Calu3 (cell line): ENCODE measurements at regions of chr2 and their contacts with region 1.

Region 1: GRCh38 chr2:85772019-85772745 is 18.4 kb downstream of the ATOH8 start:
- DNase-seq: peak; percentile 92
- H3K4me3 Mint-ChIP-seq: no peak overlapping the region
- H3K27ac Mint-ChIP-seq: no peak overlapping the region
- H3K4me1 Mint-ChIP-seq: peaks cover 25% of the 10 kb centered on the region
- H3K27me3 Mint-ChIP-seq: no peaks in the 10 kb centered on the region
- CTCF ChIP-seq: peak; percentile 16

Region 2: DNA sequence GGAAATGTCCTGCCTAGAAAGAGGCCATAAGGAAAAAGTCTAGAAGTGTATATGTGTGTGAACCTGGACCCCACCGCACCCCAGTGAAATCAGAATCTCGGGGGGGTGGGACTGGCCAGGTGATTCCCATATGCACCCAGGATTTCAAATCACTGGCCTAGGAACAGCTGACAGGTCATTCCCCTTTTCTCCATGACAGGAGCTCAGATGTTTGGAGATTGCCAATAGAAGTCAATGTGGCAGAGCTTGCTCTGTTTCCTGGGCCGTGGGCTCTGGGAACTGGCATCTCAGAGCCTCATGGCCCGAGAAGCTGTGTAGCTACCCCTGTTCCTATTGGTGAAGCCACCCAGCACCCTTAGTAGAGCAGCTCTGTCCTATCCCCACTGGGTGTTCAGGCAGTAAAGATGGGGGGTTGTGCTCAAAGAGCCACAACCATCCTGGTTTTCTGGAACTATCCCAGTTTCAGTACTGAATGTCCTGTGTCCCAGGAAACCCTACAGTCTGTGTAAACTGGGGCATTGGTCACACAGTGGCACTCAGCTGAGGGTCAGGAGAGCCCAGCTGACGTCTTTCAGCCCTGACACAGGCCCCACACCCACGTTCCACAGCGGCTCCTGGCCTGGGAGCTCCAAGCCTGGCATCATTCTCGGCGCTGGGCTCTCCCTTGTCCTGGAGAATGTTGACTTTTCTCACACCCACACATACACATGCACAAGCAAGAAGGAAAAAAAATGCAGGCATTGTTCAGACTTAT is 59.2 kb before region 1 on chr2:
- CTCF ChIA-PET with region 1: no interaction called
- intact Hi-C with region 1: no loop called
- DNase-seq: peak; percentile 50
- H3K4me3 Mint-ChIP-seq: no peak overlapping the region
- H3K27ac Mint-ChIP-seq: no peak overlapping the region
- H3K4me1 Mint-ChIP-seq: peaks cover 11% of the 10 kb centered on the region
- H3K27me3 Mint-ChIP-seq: peaks cover 7% of the 10 kb centered on the region
- CTCF ChIP-seq: no peak

Region 3: DNA sequence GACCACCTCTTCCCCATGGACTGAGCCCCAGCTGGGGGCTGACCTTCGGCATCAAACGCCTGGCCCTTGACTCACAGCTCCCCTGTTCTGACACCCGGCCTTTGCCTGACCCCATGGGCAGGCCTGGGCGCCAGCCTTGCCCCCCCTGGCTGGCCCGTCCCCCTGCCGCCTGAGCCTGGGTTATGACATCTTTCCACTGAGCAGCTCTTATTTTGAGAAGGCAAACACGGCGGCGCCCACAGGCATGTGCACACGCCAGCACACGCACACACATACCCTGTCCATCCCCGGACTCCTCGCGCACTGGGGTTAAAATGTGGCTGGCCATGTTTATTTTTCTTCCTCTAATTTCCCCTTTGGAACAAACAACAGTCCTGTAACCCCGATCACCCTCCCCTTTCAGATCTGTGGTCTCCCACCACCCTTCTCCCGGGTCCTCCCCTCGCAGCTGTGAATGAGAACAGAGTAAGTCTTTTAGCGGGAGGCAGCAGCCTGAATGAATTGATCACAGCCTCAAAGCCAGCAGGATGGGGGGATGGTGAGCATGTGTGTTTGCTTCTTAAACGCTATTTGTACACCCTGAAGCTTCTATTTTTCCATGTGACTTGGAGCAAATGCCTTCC is 30.2 kb before region 1 on chr2:
- CTCF ChIA-PET with region 1: interaction called, 22 read pairs
- intact Hi-C with region 1: loop called (anchors 1 kb)
- DNase-seq: peak; percentile 67
- H3K4me3 Mint-ChIP-seq: peak overlapping the region; percentile 53
- H3K27ac Mint-ChIP-seq: peak overlapping the region; percentile 84
- H3K4me1 Mint-ChIP-seq: peaks cover 38% of the 10 kb centered on the region
- H3K27me3 Mint-ChIP-seq: no peaks in the 10 kb centered on the region
- CTCF ChIP-seq: no peak

Region 4: DNA sequence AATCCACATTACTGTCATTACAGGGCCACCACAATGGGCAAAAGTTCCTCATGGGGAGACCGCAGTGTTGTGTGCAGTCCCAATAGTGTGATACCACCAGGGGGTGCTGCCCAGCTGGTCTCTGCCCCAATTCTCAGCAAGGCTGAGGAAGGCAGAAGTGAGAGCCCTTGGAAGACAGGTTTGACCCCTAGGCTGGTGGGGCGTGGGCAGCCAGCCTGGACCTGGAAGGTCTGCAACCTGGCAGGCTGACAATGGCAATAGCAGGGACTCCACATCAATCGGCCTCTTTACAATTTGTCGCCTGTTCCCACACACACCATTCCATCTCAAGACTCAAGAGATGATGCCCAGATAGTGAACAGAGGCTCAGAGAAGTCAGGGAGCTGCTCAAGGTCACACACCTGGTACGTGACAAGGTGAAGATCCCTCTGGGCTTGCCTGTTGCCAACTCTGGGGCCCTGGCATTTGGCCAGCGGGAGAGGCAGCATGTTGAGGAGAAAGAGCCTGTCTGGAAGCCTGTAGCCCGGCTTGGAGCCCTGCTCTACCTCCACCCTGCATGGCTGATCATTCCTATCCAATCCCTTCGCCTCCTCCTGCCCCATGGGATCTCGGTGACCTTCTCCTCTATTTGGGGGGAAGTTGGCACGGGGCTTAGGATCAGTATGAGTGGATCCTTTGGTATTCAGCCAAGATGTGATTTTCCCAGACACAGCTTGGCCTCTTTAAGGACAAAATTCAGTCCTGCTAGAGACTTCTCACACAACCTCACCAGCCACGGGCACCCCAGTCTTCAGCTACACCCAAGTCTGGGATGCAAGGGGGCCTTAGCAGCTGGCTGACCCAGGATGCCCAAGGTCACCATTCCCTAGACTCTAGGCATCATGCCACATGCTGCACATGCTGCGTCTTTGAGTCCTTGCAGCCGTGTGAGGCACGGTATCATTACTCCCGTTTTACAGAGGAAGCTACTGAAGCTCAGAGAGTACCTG is 21.3 kb before region 1 on chr2:
- CTCF ChIA-PET with region 1: interaction called, 8 read pairs
- intact Hi-C with region 1: loop called (anchors 2 kb)
- DNase-seq: peak; percentile 85
- H3K4me3 Mint-ChIP-seq: no peak overlapping the region
- H3K27ac Mint-ChIP-seq: no peak overlapping the region
- H3K4me1 Mint-ChIP-seq: peaks cover 15% of the 10 kb centered on the region
- H3K27me3 Mint-ChIP-seq: peaks cover 70% of the 10 kb centered on the region
- CTCF ChIP-seq: peak; percentile 73

Region 5: GRCh38 chr2:85804583-85804982 is 32.4 kb after region 1 on chr2:
- CTCF ChIA-PET with region 1: interaction called, 4 read pairs
- intact Hi-C with region 1: loop called (anchors 1 kb)
- DNase-seq: no peak
- H3K4me3 Mint-ChIP-seq: no peak overlapping the region
- H3K27ac Mint-ChIP-seq: no peak overlapping the region
- H3K4me1 Mint-ChIP-seq: peaks cover 25% of the 10 kb centered on the region
- H3K27me3 Mint-ChIP-seq: no peaks in the 10 kb centered on the region
- CTCF ChIP-seq: peak; percentile 42